Activated CD4-positive, alpha-beta T cell treated with anti-CD3 and anti-CD28 coated beads, Interleukin-2, amount 10 ng/mL, durations not matched to agents 24 days and 14 days (primary cell): ENCODE measurements at regions of chr5 and their contacts with region 1.

Region 1: GRCh38 chr5:169670769-169671525 is 33.9 kb downstream of the DOCK2 start:
- DNase-seq: peak; percentile 79
- H3K4me3 Mint-ChIP-seq: peak overlapping the region; percentile 33
- H3K27ac Mint-ChIP-seq: peak overlapping the region; percentile 61
- H3K4me1 Mint-ChIP-seq: peaks cover 27% of the 10 kb centered on the region
- H3K27me3 Mint-ChIP-seq: no peaks in the 10 kb centered on the region

Region 2: GRCh38 chr5:169637085-169637548 is 33.8 kb before region 1 on chr5 and contains the start of gene DOCK2:
- intact Hi-C with region 1: loop called (anchors 1 kb)
- DNase-seq: peak; percentile 92
- H3K4me3 Mint-ChIP-seq: peak within 1 kb of the TSS; percentile 91
- H3K27ac Mint-ChIP-seq: peak within 1 kb of the TSS; percentile 95
- H3K4me1 Mint-ChIP-seq: peaks cover 41% of the 10 kb centered on the region
- H3K27me3 Mint-ChIP-seq: peaks cover 9% of the 10 kb centered on the region
- total RNA-seq, gene DOCK2: 206 and 215 TPM in 2 replicates

Region 3: DNA sequence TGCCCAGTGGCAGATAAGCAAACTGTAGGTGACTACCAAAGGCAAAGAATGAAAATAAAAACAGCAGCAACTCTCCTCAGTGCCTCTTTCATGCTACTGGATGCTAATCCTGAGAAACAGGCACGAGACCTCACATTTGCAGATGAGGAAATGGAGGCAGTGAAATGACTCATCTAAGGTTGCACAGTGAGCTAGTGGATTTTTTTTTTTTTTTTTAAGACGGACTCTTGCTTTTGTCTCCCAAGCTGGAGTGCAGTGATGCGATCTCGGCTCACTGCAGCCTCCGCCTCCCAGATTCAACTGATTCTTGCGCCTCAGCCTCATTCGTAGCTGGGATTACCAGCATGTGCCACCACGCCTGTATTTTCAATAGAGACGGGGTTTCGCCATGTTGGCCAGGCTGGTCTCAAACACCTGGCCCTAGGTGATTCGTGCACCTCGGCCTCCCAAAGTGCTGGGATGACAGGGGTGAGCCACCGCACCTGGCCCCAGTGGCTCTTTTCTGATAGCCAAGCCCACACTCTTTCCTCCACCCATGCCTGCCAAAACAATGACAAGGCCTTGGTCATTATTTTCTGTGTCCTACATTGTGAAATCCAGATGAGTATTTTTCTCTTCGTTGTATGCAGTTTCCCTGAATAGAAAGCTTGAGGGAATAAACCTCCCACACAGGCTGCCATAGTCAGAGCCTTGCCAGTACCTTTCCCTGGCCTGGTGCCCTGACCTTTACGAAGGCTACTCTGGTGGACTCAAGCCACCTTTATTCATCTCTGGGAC is 14.6 kb before region 1 on chr5:
- intact Hi-C with region 1: loop called (anchors 1 kb)
- DNase-seq: peak; percentile 69
- H3K4me3 Mint-ChIP-seq: peak overlapping the region; percentile 64
- H3K27ac Mint-ChIP-seq: peak overlapping the region; percentile 81
- H3K4me1 Mint-ChIP-seq: peaks cover 61% of the 10 kb centered on the region
- H3K27me3 Mint-ChIP-seq: no peaks in the 10 kb centered on the region